ENCODE measurements at regions of chr7 and their contacts with region 1.

Region 1: GRCh38 chr7:16071246-16071857 is 350.0 kb downstream of the CRPPA start:
- DNase-seq: no peak
- H3K4me3 ChIP-seq: no peak overlapping the region
- CTCF ChIP-seq: peak in 1 of 3 donors; percentile 83
- POLR2A ChIP-seq: no peak

Region 2: GRCh38 chr7:15305002-15305600 is 766.3 kb before region 1 on chr7:
- intact Hi-C with region 1: loop called (anchors 10 kb)
- DNase-seq: peak in 1 of 2 donors; percentile 77
- H3K4me3 ChIP-seq: no peak overlapping the region
- CTCF ChIP-seq: no peak
- POLR2A ChIP-seq: no peak

Region 3: DNA sequence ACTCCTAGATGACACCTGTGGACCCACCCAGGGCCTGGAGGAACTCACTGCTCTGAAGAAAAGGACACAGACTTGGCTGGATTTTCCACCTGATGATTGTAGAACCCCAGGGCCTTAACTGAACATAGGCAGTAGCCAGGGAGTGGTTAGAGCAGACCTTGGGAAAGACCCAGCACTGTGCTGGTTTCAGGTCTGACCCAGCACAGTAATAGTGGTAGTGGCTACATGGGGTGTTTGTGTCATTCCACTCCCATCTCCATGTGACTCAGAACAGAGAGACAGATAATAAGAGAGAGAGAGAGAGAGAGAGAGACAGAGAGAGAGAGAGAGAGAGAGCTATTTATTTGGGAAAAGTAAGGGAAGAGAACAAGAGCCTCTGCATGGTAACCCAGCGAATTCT is 145.7 kb before region 1 on chr7:
- intact Hi-C with region 1: no loop called
- DNase-seq: no peak
- H3K4me3 ChIP-seq: no peak overlapping the region
- CTCF ChIP-seq: no peak
- POLR2A ChIP-seq: no peak

Region 4: GRCh38 chr7:16189026-16189715 is 117.8 kb after region 1 on chr7:
- intact Hi-C with region 1: no loop called
- DNase-seq: no peak
- H3K4me3 ChIP-seq: no peak overlapping the region
- CTCF ChIP-seq: no peak
- POLR2A ChIP-seq: no peak

Measured in lower leg skin (tissue), 4 donors.